ENCODE measurements at regions of chr11 and their contacts with region 1.

Region 1: GRCh38 chr11:83156150-83156995 is 558 bp upstream of the PCF11 start:
- DNase-seq: peak; percentile 100
- ATAC-seq: peak; percentile 89
- H3K4me3 ChIP-seq: peak overlapping the region; percentile 75
- H3K27ac ChIP-seq: peak overlapping the region; percentile 76
- H3K4me1 ChIP-seq: peaks cover 12% of the 10 kb centered on the region
- H3K27me3 ChIP-seq: no peaks in the 10 kb centered on the region
- CTCF ChIP-seq: no peak

Region 2: DNA sequence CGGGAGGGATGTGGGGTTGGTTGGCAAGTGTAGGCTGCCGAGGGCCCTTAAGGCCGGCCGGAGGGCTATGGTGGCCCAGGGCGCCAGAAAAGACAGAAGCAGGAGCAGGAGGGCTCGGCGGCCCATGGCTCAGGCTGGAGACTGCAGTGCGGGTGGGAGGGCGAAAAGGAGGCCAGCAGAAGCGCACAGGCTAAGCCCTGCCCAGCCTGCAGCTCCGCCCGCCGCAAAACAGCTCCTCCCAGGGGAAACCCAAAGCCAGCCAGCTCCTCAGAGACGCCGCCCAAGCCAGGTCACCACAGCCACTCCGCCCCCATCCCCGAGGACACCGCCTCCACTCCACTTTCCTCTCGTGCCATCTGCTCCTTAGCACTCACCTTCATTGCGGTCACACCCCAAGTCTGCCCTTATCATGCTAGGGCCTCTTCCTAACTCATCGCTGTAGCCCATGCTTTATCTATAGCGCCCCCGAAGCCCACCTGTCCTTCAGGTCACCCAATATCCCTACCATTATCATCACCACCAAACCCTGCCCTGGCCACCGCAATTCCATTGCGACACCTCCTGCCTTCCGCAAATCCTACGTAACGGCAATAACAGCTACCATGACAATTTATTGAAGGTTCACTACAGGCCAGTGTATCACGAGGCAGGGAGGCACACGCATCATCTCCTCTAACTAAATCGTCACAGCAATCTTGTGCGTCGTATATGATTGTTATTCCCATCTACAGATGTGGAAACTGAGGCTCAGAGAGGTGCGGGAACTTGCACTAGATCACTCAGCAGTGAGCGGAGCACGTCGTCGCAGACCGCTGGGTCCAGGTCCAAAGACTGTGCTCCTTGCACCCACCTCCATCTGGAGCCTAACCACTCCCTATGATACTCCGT is 255.9 kb before region 1 on chr11 and contains the start of gene PRCP:
- CTCF ChIA-PET with region 1: no interaction called
- POLR2A ChIA-PET with region 1: interaction called, 18 read pairs
- intact Hi-C with region 1: loop called (anchors 2 kb)
- DNase-seq: peak; percentile 96
- ATAC-seq: peak; percentile 88
- H3K4me3 ChIP-seq: peak within 1 kb of the TSS; percentile 83
- H3K27ac ChIP-seq: peak within 1 kb of the TSS; percentile 9
- H3K4me1 ChIP-seq: peaks cover 22% of the 10 kb centered on the region
- H3K27me3 ChIP-seq: no peaks in the 10 kb centered on the region
- CTCF ChIP-seq: no peak
- total RNA-seq, gene PRCP: 36.6 and 51.5 TPM in 2 replicates

Region 3: DNA sequence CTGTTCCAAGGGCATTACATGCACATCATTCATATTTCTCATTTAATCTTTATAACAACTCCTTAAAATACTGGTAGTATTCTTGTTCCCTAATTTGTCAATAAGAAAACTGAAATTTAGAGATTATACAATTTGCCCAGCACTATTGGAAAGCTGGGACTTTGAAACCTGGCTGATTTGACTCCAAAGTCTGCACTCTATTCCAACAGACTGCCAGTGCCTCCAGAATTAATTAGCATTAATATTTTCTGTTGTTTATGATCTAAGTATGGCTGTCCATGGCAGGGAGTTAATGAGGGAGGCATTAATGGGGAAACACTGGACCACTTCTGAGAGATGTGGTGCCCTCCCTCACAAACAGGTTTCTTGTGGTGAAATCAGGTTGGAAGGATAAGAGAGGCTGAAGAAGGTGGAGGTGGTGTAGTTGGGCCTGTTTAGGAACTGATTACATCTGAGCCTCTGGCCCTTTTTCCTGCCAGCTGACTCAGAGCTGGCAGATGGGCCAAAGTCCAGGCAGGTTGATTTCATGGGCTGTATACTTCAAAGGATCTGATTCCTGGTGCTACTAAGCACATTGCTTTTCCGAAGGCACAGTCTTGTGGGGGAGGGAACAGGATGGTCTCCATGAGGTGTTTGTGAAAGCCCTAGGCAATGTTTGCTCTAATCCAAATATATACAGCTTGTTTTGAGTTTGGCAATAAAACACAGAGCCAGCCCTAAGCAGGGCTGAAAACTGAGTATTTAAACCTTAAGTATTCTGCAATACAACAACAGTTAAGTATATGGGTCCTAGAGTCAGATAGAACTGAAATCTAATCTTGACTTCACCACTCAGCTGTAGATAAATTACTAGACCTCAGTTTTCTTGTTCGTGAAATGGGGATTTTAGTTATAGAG is 63.6 kb before region 1 on chr11:
- CTCF ChIA-PET with region 1: no interaction called
- POLR2A ChIA-PET with region 1: no interaction called
- intact Hi-C with region 1: loop called (anchors 1 kb)
- DNase-seq: peak; percentile 96
- ATAC-seq: peak; percentile 94
- H3K4me3 ChIP-seq: no peak overlapping the region
- H3K27ac ChIP-seq: peak overlapping the region; percentile 14; the same call in 1 of the 2 replicates
- H3K4me1 ChIP-seq: peaks cover 17% of the 10 kb centered on the region
- H3K27me3 ChIP-seq: no peaks in the 10 kb centered on the region
- CTCF ChIP-seq: no peak

Region 4: DNA sequence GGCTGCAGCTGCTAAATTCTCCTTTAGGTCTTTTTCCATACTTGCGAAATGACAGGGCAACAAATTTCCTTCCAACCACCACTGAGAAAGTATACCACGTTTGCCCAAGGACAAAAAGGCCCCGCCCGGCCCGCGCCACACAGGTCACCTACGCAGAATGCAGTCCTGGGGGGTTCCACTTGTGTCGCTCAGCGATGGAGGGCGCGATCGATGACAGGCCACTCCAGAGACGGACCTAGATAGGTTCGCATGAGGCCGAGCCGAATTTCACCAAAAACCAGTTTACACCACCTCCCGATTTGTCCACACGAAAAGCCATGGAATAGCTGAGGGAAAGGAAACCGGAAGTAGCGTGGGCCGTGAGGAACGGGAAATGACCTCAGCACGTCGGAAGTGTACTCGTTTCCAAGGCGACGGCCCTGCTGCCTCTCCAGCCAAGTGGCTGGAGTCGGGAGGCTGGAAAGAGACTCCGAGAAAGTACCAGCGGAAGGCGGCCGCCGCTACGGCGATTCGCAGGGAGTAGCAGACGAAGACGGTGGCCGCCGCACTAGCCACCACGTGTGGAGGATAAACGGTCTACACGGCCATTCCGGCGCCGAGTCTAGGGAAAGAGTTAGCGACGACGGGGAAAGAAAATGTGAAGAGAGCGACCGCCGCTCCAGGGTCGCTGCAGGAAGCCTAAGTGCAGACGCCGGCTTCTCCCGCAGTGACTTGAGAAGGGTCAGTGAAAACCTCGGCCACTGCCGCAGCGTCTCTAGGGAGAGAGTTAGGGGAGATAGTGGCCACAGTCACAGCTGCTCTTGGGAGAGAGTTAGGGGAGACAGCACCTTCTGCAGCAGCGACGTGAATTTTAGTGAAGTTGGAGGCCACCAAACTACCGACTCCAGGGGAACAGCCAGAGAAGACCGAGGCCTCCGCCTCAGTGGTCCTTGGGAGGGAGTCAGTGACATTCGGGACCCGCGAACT is 37.2 kb after region 1 on chr11 and contains the start of gene ANKRD42:
- CTCF ChIA-PET with region 1: no interaction called
- POLR2A ChIA-PET with region 1: interaction called, 3 read pairs
- intact Hi-C with region 1: loop called (anchors 1 kb)
- DNase-seq: peak; percentile 98
- ATAC-seq: peak; percentile 84
- H3K4me3 ChIP-seq: peak within 1 kb of the TSS; percentile 96
- H3K27ac ChIP-seq: peak within 1 kb of the TSS; percentile 58
- H3K4me1 ChIP-seq: peaks cover 29% of the 10 kb centered on the region
- H3K27me3 ChIP-seq: no peaks in the 10 kb centered on the region
- CTCF ChIP-seq: no peak
- total RNA-seq, gene ANKRD42: 6.6 and 11.2 TPM in 2 replicates